WTC11 (cell line): ENCODE measurements at regions of chr7 and their contacts with region 1.

Region 1: GRCh38 chr7:121395961-121396757 is at the start of gene FAM3C:
- DNase-seq: peak; percentile 90
- ATAC-seq: peak; percentile 95
- H3K4me3 Mint-ChIP-seq: peak within 1 kb of the TSS; percentile 93
- H3K27ac Mint-ChIP-seq: peak within 1 kb of the TSS; percentile 87
- H3K4me1 Mint-ChIP-seq: peaks cover 20% of the 10 kb centered on the region
- H3K27me3 Mint-ChIP-seq: no peaks in the 10 kb centered on the region
- CTCF ChIP-seq: peak; percentile 89
- total RNA-seq, gene FAM3C: 51.2 to 65.7 TPM (median 54.4 TPM) in 3 replicates

Region 2: DNA sequence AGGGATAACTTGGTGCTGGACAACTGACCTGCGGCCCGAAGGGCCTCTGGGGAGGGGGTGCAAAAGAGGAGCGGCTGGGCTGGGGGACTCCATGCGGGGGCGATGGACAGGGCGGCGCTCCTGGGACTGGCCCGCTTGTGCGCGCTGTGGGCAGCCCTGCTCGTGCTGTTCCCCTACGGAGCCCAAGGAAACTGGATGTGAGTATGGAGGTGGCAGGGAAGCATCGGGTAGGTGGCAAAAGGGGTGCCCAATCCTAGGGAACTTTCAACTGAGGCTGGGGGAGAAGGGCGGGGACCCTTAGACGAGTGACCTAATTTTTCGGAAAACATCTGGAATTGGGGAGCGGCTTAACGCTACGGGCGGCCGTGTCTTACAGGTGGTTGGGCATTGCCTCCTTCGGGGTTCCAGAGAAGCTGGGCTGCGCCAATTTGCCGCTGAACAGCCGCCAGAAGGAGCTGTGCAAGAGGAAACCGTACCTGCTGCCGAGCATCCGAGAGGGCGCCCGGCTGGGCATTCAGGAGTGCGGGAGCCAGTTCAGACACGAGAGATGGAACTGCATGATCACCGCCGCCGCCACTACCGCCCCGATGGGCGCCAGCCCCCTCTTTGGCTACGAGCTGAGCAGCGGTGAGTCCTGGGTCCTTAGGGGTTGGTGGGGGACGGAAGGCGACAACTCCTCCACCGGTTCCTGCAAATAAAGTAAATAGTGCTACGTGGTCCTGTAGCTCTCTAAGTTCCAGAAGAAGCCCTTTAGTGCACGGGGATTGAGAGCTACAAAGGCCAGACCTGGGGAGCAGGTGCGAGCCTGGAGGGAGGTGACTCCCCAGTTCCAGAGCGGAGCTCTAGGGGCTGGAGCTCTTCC is 66.7 kb before region 1 on chr7:
- CTCF ChIA-PET with region 1: interaction called, 11 read pairs
- POLR2A ChIA-PET with region 1: interaction called, 3 read pairs
- DNase-seq: peak; percentile 71
- ATAC-seq: peak; percentile 73
- H3K4me3 Mint-ChIP-seq: peak overlapping the region; percentile 79
- H3K27ac Mint-ChIP-seq: no peak overlapping the region
- H3K4me1 Mint-ChIP-seq: peaks cover 13% of the 10 kb centered on the region
- H3K27me3 Mint-ChIP-seq: peaks cover 51% of the 10 kb centered on the region
- CTCF ChIP-seq: no peak

Region 3: GRCh38 chr7:121385800-121386179 is 10.4 kb before region 1 on chr7:
- CTCF ChIA-PET with region 1: interaction called, 22 read pairs
- POLR2A ChIA-PET with region 1: interaction called, 4 read pairs
- DNase-seq: no peak
- ATAC-seq: no peak
- H3K4me3 Mint-ChIP-seq: no peak overlapping the region
- H3K27ac Mint-ChIP-seq: no peak overlapping the region
- H3K4me1 Mint-ChIP-seq: peaks cover 42% of the 10 kb centered on the region
- H3K27me3 Mint-ChIP-seq: no peaks in the 10 kb centered on the region
- CTCF ChIP-seq: no peak

Region 4: DNA sequence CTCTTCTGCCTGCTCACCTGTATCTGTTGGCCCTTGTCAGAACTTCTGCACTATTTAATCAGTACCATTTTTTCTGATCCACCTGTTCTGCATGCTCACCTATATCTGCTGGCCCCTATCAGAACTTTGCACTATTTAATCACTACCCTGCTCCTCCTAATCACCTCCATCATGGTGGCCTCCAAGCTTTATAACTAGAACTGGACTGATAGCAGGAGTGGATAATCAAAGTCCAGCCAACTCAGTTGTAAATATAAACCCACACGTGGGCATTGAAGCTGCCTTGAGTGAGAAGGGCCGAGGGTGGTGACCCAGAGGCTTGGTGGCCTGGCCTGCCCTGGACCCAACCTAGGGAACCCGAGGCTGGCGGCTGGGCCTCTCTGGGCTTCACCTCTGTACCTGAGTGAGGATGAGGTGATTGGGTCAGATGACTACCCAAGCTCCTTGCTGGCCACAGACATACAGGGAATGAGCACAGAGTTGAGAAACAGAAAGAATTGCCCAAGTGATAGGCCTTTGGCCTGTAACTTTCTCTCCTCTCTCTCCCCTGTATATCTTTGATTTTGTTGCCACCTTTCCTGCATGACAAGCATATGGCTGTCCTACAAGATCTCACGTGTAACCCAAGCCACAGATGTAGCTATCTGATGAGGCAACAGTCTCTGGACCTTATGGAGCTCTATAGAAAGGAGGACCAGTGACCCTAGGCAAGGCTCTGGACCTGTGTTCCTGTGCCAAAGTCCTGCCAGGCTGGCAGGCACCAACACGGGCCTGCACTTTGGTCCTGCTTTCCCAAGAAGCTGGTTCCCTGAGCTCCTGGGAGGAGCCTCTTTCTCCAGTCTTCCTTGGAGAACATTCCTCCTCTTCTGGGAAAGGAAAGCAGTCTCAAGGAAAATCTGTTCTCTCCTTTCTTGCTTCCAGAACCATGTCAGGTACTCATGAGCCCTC is 23.3 kb after region 1 on chr7:
- CTCF ChIA-PET with region 1: no interaction called
- POLR2A ChIA-PET with region 1: no interaction called
- DNase-seq: no peak
- ATAC-seq: no peak
- H3K4me3 Mint-ChIP-seq: no peak overlapping the region
- H3K27ac Mint-ChIP-seq: no peak overlapping the region
- H3K4me1 Mint-ChIP-seq: no peaks in the 10 kb centered on the region
- H3K27me3 Mint-ChIP-seq: no peaks in the 10 kb centered on the region
- CTCF ChIP-seq: no peak

Region 5: GRCh38 chr7:121437456-121438127 is 41.4 kb after region 1 on chr7:
- CTCF ChIA-PET with region 1: interaction called, 23 read pairs
- POLR2A ChIA-PET with region 1: interaction called, 9 read pairs
- DNase-seq: no peak
- ATAC-seq: no peak
- H3K4me3 Mint-ChIP-seq: 0 out of 2 replicates have a peak overlapping the region, but pooled peaks have one; percentile 46
- H3K27ac Mint-ChIP-seq: peak overlapping the region; percentile 97
- H3K4me1 Mint-ChIP-seq: peaks cover 24% of the 10 kb centered on the region
- H3K27me3 Mint-ChIP-seq: no peaks in the 10 kb centered on the region
- CTCF ChIP-seq: no peak

Region 6: GRCh38 chr7:121547544-121548092 is 151.5 kb after region 1 on chr7:
- CTCF ChIA-PET with region 1: interaction called, 10 read pairs
- POLR2A ChIA-PET with region 1: no interaction called
- DNase-seq: no peak
- ATAC-seq: peak; percentile 81
- H3K4me3 Mint-ChIP-seq: no peak overlapping the region
- H3K27ac Mint-ChIP-seq: no peak overlapping the region
- H3K4me1 Mint-ChIP-seq: peaks cover 4% of the 10 kb centered on the region
- H3K27me3 Mint-ChIP-seq: no peaks in the 10 kb centered on the region
- CTCF ChIP-seq: peak; percentile 39

Region 7: GRCh38 chr7:121572615-121573014 is 176.5 kb after region 1 on chr7:
- CTCF ChIA-PET with region 1: no interaction called
- POLR2A ChIA-PET with region 1: no interaction called
- DNase-seq: no peak
- ATAC-seq: no peak
- H3K4me3 Mint-ChIP-seq: no peak overlapping the region
- H3K27ac Mint-ChIP-seq: no peak overlapping the region
- H3K4me1 Mint-ChIP-seq: peaks cover 16% of the 10 kb centered on the region
- H3K27me3 Mint-ChIP-seq: no peaks in the 10 kb centered on the region; the same call in 1 of the 2 replicates
- CTCF ChIP-seq: no peak